Psoas muscle (tissue), 8 donors: ENCODE measurements at regions of chr18 and their contacts with region 1.

Region 1: GRCh38 chr18:46518438-46518837 is 138.6 kb downstream of the LOXHD1 start:
- DNase-seq: peak in 1 of 2 donors; percentile 65
- ATAC-seq: peak; percentile 93 to 97 (median 95)
- H3K4me3 ChIP-seq: no peak overlapping the region
- H3K27ac ChIP-seq: no peak overlapping the region
- H3K4me1 ChIP-seq: no peaks in the 10 kb centered on the region
- H3K27me3 ChIP-seq: no peaks in the 10 kb centered on the region
- CTCF ChIP-seq: peak; percentile 61

Region 2: GRCh38 chr18:46546111-46546640 is 27.7 kb after region 1 on chr18:
- intact Hi-C with region 1: loop called in 1 of 2 experiments (anchors 1 kb)
- DNase-seq: no peak
- ATAC-seq: no peak
- H3K4me3 ChIP-seq: no peak overlapping the region
- H3K27ac ChIP-seq: no peak overlapping the region
- H3K4me1 ChIP-seq: no peaks in the 10 kb centered on the region
- H3K27me3 ChIP-seq: peaks cover 0 to 5% (median 0%) of the 10 kb centered on the region in 3 donors
- CTCF ChIP-seq: no peak

Region 3: DNA sequence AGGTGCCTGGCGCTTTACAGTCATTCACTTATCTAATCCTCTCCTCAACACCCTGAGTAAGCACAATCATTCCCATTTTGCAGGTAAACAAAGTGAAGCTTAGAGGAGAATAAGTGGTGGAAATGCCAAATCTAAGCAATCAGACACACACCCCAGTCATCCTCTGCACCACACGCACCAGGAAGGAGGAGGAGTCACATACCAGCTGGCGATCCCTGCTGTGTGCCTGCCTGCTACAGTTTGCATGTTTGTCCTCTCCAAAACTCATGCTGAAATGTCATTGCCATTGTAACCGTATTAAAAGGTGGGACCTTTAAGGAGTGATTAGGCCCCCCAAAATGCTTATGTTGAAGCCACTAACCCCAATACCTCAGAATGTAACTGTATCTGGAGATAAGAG is 44.9 kb after region 1 on chr18:
- intact Hi-C with region 1: no loop called
- DNase-seq: no peak
- ATAC-seq: no peak
- H3K4me3 ChIP-seq: no peak overlapping the region
- H3K27ac ChIP-seq: no peak overlapping the region
- H3K4me1 ChIP-seq: no peaks in the 10 kb centered on the region
- H3K27me3 ChIP-seq: peaks cover 0 to 6% (median 2%) of the 10 kb centered on the region in 3 donors
- CTCF ChIP-seq: no peak

Region 4: GRCh38 chr18:46632401-46633071 is 114.1 kb after region 1 on chr18:
- intact Hi-C with region 1: no loop called
- DNase-seq: no peak
- ATAC-seq: no peak
- H3K4me3 ChIP-seq: no peak overlapping the region
- H3K27ac ChIP-seq: no peak overlapping the region
- H3K4me1 ChIP-seq: no peaks in the 10 kb centered on the region
- H3K27me3 ChIP-seq: no peaks in the 10 kb centered on the region
- CTCF ChIP-seq: no peak

Region 5: DNA sequence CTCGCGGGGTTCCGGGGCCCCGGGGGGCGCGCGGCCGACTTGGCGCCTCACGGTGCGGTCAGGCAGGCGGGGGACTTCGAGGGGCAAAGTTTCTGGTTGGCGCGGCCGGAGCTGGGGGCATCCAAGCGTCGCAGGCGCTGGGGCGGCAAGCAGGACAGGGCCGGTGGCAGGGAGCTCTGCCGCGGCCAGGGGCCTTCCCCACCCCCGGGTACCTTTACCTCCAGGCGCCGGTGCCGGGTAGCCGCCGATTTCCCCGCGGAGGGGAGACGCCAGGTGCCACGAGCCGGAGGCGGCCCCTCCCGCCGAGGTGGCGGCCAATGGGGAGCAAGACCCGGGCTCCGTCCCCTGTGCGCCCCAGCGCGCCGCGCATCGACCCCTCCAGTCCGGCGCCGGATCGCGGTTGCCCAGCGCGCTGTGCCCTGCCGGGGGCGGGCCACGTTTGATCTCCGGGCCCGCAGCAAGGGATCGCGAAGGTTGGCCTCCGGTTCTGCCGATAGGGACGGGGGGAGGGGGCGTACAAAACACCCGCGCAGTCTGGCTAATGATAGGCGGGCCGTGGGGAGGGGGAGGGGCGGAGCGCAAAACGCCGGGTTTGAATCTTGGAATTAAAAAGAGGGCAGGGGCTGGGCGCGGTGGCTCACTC is 238.2 kb after region 1 on chr18 and contains the start of gene ST8SIA5:
- intact Hi-C with region 1: no loop called
- DNase-seq: peak; percentile 38 to 66
- ATAC-seq: peak; percentile 64 to 72 (median 66)
- H3K4me3 ChIP-seq: peak within 1 kb of the TSS; percentile 72
- H3K27ac ChIP-seq: peak within 1 kb of the TSS; percentile 88
- H3K4me1 ChIP-seq: peaks cover 27% of the 10 kb centered on the region
- H3K27me3 ChIP-seq: peaks cover 0 to 4% (median 0%) of the 10 kb centered on the region in 3 donors
- CTCF ChIP-seq: no peak
- total RNA-seq, gene ST8SIA5: 1.8 to 9.9 (median 7.2) TPM